Naive thymus-derived CD4-positive, alpha-beta T cell (primary cell): ENCODE measurements at regions of chr12 and their contacts with region 1.

Region 1: DNA sequence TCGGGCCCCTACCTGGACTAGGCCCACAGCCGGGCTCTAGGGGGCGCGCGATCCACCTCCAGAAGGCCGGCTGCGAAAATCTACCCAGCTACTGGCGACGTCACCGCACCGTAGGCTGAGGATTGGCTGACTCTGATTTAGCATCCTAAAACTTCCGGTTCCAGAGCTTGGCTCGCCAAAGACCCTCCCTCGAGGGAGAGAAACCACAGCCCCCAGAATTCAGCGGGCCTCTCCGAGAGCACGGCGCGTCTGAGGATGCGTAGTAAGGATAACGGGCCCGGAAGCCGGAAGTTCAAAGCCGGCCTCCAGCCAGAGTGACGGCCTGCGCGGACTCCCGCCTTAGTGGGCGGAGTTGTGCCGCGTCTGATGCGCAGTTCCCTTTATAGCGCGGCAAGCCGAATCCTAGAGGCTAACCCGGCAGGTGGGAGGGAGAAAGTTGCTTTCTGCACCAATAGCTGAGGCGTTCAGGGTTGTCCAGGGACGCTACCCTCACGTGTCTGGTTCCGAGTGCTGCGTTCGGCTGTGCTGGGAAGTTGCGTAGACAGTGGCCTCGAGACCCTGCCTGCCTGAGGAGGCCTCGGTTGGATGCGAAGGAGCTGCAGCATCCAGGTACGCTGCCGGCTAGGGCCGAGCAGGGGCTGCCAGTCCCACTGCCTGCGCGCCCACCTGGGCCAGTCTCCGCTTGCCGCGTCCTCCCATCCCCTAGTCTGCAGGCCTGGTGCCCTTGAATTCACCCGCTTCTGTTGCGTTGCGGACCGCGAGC is at the start of gene COX14:
- DNase-seq: peak; percentile 97 to 100 (median 99)
- ATAC-seq: peak; percentile 90
- H3K4me3 ChIP-seq: peak within 1 kb of the TSS; percentile 94
- H3K4me3 Mint-ChIP-seq: peak within 1 kb of the TSS; percentile 92 to 100 (median 98)
- H3K27ac ChIP-seq: peak within 1 kb of the TSS; percentile 95
- H3K27ac Mint-ChIP-seq: peak within 1 kb of the TSS; percentile 95 to 99 (median 98)
- H3K4me1 ChIP-seq: peaks cover 14 to 23% of the 10 kb centered on the region in 2 donors
- H3K4me1 Mint-ChIP-seq: peaks cover 15 to 47% (median 40%) of the 10 kb centered on the region in 7 donors
- H3K27me3 ChIP-seq: no peaks in the 10 kb centered on the region
- H3K27me3 Mint-ChIP-seq: no peaks in the 10 kb centered on the region
- total RNA-seq, gene COX14: 37.2 to 49.4 (median 46.9) TPM

Region 2: DNA sequence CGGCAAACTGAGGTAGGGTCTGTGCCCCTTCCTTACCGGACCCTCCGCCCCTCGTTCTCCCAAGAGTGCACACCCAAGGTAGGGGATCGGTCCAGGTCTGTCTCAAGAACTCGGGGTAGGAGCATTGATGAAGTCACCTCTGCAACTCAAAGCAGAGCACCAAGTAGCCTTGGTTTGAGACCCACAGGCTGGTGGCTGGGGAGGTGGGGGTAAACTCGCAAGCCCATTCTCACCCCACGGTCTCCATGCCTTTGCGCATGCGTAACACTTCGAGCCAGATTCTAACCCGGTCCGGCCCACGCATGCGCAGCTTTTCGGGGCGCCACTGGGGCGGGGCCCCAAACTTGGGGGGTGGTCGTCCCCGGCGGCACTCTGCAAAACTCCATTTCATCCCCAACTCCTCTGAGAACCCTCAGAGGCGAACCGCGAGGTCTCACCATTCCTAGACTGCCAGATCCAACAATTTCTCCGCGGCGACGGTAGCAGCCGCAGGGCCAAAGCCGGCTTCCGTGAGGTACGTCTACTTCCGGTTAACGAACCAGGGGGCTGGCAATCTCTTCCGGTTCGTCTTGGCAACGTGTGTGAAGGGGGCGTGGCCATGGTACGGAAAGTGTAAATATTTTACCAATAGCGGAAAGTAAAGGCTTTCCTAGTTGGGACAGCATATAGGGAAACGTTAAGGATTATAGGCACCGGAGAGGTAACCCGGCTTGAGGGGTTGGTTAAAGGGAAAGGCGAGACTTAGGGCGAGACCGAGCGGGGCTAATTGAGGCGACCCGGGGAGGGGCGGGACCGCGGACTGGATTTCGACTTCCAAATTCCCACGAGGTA is 544.0 kb before region 1 on chr12 and contains the start of gene MCRS1:
- CTCF ChIA-PET with region 1: no interaction called
- POLR2A ChIA-PET with region 1: no interaction called
- intact Hi-C with region 1: loop called in 1 of 2 experiments (anchors 5 kb)
- DNase-seq: peak; percentile 89 to 94 (median 91)
- ATAC-seq: peak; percentile 92
- H3K4me3 ChIP-seq: peak within 1 kb of the TSS; percentile 81
- H3K4me3 Mint-ChIP-seq: peak within 1 kb of the TSS; percentile 94 to 100 (median 99)
- H3K27ac ChIP-seq: peak within 1 kb of the TSS; percentile 91
- H3K27ac Mint-ChIP-seq: peak within 1 kb of the TSS; percentile 98 to 100 (median 99)
- H3K4me1 ChIP-seq: peaks cover 33 to 42% of the 10 kb centered on the region in 2 donors
- H3K4me1 Mint-ChIP-seq: peaks cover 45 to 76% (median 61%) of the 10 kb centered on the region in 7 donors
- H3K27me3 ChIP-seq: no peaks in the 10 kb centered on the region
- H3K27me3 Mint-ChIP-seq: peaks cover 0 to 3% (median 0%) of the 10 kb centered on the region in 5 donors
- total RNA-seq, gene MCRS1: 70.0 to 85.2 (median 71.4) TPM

Region 3: GRCh38 chr12:50032639-50033581 is 79.0 kb before region 1 on chr12:
- CTCF ChIA-PET with region 1: no interaction called
- POLR2A ChIA-PET with region 1: no interaction called
- intact Hi-C with region 1: no loop called
- DNase-seq: no peak
- ATAC-seq: peak; percentile 73
- H3K4me3 ChIP-seq: no peak overlapping the region
- H3K4me3 Mint-ChIP-seq: peak overlapping the region in 1 of 10 donors; percentile 28
- H3K27ac ChIP-seq: no peak overlapping the region
- H3K27ac Mint-ChIP-seq: no peak overlapping the region
- H3K4me1 ChIP-seq: no peaks in the 10 kb centered on the region
- H3K4me1 Mint-ChIP-seq: peaks cover 0 to 3% (median 0%) of the 10 kb centered on the region in 7 donors
- H3K27me3 ChIP-seq: peaks cover 0 to 4% of the 10 kb centered on the region in 2 donors
- H3K27me3 Mint-ChIP-seq: peaks cover 19 to 36% (median 27%) of the 10 kb centered on the region in 5 donors

Region 4: GRCh38 chr12:50084775-50085614 is 26.9 kb before region 1 on chr12 and contains the start of gene SMARCD1:
- CTCF ChIA-PET with region 1: interaction called, 29 read pairs
- POLR2A ChIA-PET with region 1: interaction called, 53 read pairs
- intact Hi-C with region 1: loop called (anchors 1 kb)
- DNase-seq: peak; percentile 65 to 85 (median 76)
- ATAC-seq: peak; percentile 92
- H3K4me3 ChIP-seq: peak within 1 kb of the TSS; percentile 82
- H3K4me3 Mint-ChIP-seq: peak within 1 kb of the TSS; percentile 87 to 98 (median 94)
- H3K27ac ChIP-seq: peak within 1 kb of the TSS; percentile 98
- H3K27ac Mint-ChIP-seq: peak within 1 kb of the TSS; percentile 93 to 99 (median 96)
- H3K4me1 ChIP-seq: peaks cover 0 to 5% of the 10 kb centered on the region in 2 donors
- H3K4me1 Mint-ChIP-seq: peaks cover 6 to 46% (median 40%) of the 10 kb centered on the region in 7 donors
- H3K27me3 ChIP-seq: no peaks in the 10 kb centered on the region
- H3K27me3 Mint-ChIP-seq: no peaks in the 10 kb centered on the region
- total RNA-seq, gene SMARCD1: 65.1 to 88.5 (median 67.5) TPM

Region 5: DNA sequence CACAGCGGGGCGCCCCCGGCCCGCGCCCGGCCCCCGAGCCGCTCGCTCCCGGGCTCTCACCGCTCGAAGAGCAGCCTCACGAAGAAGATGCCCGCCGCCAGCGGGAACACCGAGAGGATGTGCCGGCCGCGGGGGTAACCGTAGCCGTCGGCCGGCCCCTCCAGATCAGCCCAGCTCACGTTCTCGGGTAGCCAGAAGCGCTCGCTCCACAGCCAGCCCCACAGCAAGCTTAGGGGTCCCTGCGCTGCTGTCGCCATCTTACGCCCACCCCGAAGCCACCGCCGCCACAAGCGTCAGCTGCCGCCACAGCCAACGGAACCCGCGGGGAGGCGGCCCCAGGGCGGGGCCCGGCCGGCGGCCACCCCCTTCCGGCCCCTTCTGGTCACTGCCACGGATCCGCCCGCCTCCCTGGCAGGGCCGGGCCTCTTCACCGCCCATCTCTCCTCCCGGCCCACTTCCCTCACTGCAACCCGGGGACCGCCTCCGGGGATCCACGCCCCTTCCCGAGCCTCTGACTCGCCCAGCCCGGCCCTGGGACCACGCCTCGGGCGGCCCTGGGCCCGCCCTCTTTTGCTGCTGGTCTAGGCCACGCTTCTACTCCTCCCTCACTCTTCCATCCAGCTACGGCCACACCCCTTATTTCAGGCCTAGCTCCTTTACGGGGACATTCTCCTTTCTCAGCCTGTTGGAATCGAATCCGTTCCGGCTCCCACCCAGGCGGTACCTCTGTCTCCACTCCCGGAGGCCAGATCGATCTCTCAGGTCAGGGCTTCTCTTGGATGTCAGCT is 55.4 kb after region 1 on chr12 and contains the start of gene CERS5:
- CTCF ChIA-PET with region 1: interaction called, 14 read pairs
- POLR2A ChIA-PET with region 1: interaction called, 35 read pairs
- intact Hi-C with region 1: loop called (anchors 1 kb)
- DNase-seq: peak; percentile 87 to 98 (median 93)
- ATAC-seq: peak; percentile 99
- H3K4me3 ChIP-seq: peak within 1 kb of the TSS; percentile 69
- H3K4me3 Mint-ChIP-seq: peak within 1 kb of the TSS; percentile 82 to 98 (median 93)
- H3K27ac ChIP-seq: peak within 1 kb of the TSS; percentile 93
- H3K27ac Mint-ChIP-seq: peak within 1 kb of the TSS; percentile 84 to 98 (median 93)
- H3K4me1 ChIP-seq: peaks cover 11 to 13% of the 10 kb centered on the region in 2 donors
- H3K4me1 Mint-ChIP-seq: peaks cover 16 to 36% (median 30%) of the 10 kb centered on the region in 7 donors
- H3K27me3 ChIP-seq: no peaks in the 10 kb centered on the region
- H3K27me3 Mint-ChIP-seq: no peaks in the 10 kb centered on the region
- total RNA-seq, gene CERS5: 41.0 to 52.2 (median 47.7) TPM

Region 6: DNA sequence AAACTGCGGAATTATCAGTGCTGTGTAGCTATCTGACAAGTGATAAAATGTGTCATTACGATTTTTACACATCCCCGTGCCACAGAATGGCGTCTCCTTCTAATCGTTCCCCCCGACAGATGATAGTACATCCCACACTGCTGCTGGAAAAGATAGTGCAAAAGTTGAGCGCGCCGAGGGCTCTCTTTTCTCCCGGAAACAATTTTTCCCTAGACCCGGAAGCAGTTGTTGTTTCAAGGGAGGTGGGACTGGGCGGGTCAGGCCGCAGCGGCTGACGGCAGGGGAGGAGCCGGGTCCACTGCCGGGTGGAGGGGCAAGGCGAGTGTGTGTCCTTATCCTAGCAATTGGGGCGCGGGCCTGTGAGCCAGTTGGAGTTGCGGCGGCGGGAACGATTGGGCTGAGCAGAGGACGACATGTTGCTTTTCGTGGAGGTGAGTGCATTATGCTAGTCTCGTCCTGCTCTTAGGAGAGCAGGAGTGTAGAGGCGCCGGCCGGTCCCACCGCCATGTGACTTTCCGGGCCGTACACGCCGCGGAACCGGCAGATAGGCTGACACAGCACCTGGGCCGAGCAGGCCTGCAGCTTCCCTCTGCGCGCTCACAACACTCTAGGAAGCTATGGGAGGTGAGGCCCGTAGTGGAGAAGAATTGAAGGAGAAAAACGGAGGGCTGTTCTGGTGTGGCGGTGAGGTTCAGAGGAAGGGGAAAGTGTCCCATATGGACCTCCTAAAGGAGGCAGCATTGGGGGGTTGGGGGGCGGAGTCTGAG is 288.9 kb after region 1 on chr12 and contains the start of gene LARP4:
- CTCF ChIA-PET with region 1: interaction called, 3 read pairs
- POLR2A ChIA-PET with region 1: interaction called, 3 read pairs
- intact Hi-C with region 1: loop called (anchors 1 kb)
- DNase-seq: peak; percentile 70 to 92 (median 88)
- ATAC-seq: peak; percentile 98
- H3K4me3 ChIP-seq: peak within 1 kb of the TSS; percentile 66
- H3K4me3 Mint-ChIP-seq: peak within 1 kb of the TSS; percentile 81 to 100 (median 99)
- H3K27ac ChIP-seq: peak within 1 kb of the TSS; percentile 77
- H3K27ac Mint-ChIP-seq: peak within 1 kb of the TSS; percentile 86 to 97 (median 95)
- H3K4me1 ChIP-seq: peaks cover 9 to 12% of the 10 kb centered on the region in 2 donors
- H3K4me1 Mint-ChIP-seq: peaks cover 23 to 55% (median 37%) of the 10 kb centered on the region in 7 donors
- H3K27me3 ChIP-seq: no peaks in the 10 kb centered on the region
- H3K27me3 Mint-ChIP-seq: peaks cover 0 to 13% (median 6%) of the 10 kb centered on the region in 5 donors
- total RNA-seq, gene LARP4: 22.1 to 68.9 (median 38.4) TPM